Pancreas (tissue), 10 donors: ENCODE measurements at regions of chr20 and their contacts with region 1.

Region 1: GRCh38 chr20:37282556-37282955 is 6.9 kb upstream of the MANBAL start:
- DNase-seq: no peak
- ATAC-seq: peak in 3 of 4 donors; percentile 14 to 30 (median 29)
- H3K4me3 ChIP-seq: no peak overlapping the region
- H3K27ac ChIP-seq: no peak overlapping the region
- H3K4me1 ChIP-seq: no peaks in the 10 kb centered on the region
- H3K27me3 ChIP-seq: no peaks in the 10 kb centered on the region
- CTCF ChIP-seq: no peak

Region 2: GRCh38 chr20:36684747-36685146 is 597.8 kb before region 1 on chr20:
- intact Hi-C with region 1: no loop called
- DNase-seq: no peak
- ATAC-seq: no peak
- H3K4me3 ChIP-seq: no peak overlapping the region
- H3K27ac ChIP-seq: no peak overlapping the region
- H3K4me1 ChIP-seq: no peaks in the 10 kb centered on the region
- H3K27me3 ChIP-seq: no peaks in the 10 kb centered on the region
- CTCF ChIP-seq: no peak

Region 3: DNA sequence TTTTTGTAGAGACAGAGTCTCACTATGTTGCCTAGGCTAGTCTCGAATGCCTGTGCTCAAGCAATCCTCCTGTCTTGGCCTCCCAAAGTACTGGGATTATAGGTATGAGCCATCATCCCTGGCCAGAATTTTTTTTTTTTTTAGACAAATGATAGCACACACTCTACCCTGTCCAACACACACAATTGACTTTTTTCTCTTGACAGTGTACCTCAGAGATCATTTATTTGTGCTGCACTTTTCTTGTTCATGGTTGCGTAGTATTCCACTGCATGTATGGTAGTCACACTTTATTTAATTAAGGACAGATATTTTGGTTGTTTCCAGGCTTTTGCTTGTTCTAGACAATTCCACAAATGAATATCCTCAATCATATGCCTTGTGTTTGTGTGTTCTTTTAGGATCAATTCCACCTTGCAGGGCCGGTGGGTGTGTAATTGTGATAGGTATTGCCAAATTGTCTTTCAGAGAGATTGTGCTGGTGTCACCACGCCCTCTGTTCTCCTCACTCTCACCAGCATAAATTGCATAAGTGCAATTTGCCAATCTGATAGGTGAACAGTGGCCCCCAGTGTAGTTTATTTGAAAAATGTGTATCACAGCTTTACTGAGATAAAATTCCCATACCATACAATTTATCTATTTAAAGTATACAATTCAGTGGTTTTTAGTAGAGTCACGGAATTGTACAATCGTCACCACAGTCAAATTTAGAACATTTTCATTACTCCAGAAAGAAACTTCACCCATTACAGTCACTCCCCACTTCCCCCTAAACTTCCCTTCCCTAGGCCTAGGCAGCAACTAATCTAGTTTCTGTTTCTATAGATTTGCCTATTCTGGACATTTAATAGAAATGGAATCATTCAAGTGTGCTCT is 83.4 kb after region 1 on chr20:
- intact Hi-C with region 1: loop called in 1 of 3 experiments (anchors 10 kb)
- DNase-seq: no peak
- ATAC-seq: peak in 1 of 4 donors; percentile 63
- H3K4me3 ChIP-seq: no peak overlapping the region
- H3K27ac ChIP-seq: no peak overlapping the region
- H3K4me1 ChIP-seq: no peaks in the 10 kb centered on the region
- H3K27me3 ChIP-seq: no peaks in the 10 kb centered on the region
- CTCF ChIP-seq: no peak